Activated naive CD4-positive, alpha-beta T cell treated with anti-CD3 and anti-CD28 coated beads for 36 hours (primary cell): ENCODE measurements at regions of chr5 and their contacts with region 1.

Region 1: DNA sequence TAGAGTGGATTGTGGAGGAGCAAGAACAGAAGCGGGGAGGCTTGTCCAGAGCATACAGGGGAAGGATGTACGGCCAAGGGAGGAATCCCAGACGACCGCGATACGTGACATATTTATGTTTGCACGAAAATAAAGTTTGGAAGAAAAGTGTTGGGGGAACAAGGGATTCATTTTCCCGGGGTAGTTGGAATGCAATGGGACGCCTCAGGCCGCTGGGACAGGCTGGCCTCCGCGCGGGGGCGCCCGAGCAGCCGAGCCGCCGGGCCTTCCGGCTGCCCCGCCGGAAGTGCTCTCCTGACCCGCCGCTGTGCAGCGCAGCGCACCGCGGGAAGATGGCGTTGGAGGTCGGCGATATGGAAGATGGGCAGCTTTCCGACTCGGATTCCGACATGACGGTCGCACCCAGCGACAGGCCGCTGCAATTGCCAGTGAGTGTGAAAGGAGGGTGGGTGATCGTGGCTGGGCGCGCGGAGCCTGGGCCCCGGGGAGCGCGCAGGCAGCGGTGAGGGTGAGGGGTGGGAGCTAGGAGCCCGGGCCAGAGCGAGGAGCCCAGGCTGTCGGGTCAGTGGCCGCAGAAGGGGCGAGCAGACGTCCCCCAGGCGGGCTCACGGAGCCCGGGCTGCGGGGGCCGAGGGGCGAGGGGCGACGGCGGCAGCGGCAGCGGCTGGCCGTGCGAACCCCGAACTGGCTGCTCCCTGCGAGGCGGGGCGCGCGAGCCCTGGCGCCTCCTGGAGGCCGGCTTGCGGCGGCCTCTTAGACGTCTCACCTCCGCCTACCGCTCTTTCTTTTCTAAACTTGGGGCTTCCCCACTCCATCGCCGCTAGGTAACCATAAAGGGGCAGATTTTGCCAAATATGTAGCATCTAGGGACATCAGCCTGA is at the start of gene PHAX:
- DNase-seq: peak; percentile 78
- H3K4me3 Mint-ChIP-seq: peak within 1 kb of the TSS; percentile 90
- H3K27ac Mint-ChIP-seq: peak within 1 kb of the TSS; percentile 93
- H3K4me1 Mint-ChIP-seq: peaks cover 34% of the 10 kb centered on the region
- H3K27me3 Mint-ChIP-seq: no peaks in the 10 kb centered on the region
- total RNA-seq, gene PHAX: 34.9 to 37.2 TPM

Region 2: GRCh38 chr5:126354012-126354857 is 246.6 kb before region 1 on chr5:
- CTCF ChIA-PET with region 1: interaction called, 4 read pairs
- intact Hi-C with region 1: loop called (anchors 1 kb)
- DNase-seq: no peak
- H3K4me3 Mint-ChIP-seq: peak overlapping the region; percentile 33
- H3K27ac Mint-ChIP-seq: no peak overlapping the region
- H3K4me1 Mint-ChIP-seq: peaks cover 12% of the 10 kb centered on the region
- H3K27me3 Mint-ChIP-seq: no peaks in the 10 kb centered on the region

Region 3: GRCh38 chr5:126422989-126423788 is 177.7 kb before region 1 on chr5 and contains the start of gene GRAMD2B:
- CTCF ChIA-PET with region 1: no interaction called
- intact Hi-C with region 1: loop called (anchors 1 kb)
- DNase-seq: peak; percentile 87
- H3K4me3 Mint-ChIP-seq: peak within 1 kb of the TSS; percentile 81
- H3K27ac Mint-ChIP-seq: peak within 1 kb of the TSS; percentile 88
- H3K4me1 Mint-ChIP-seq: peaks cover 29% of the 10 kb centered on the region
- H3K27me3 Mint-ChIP-seq: no peaks in the 10 kb centered on the region
- total RNA-seq, gene GRAMD2B: 8.7 to 10.8 TPM

Region 4: DNA sequence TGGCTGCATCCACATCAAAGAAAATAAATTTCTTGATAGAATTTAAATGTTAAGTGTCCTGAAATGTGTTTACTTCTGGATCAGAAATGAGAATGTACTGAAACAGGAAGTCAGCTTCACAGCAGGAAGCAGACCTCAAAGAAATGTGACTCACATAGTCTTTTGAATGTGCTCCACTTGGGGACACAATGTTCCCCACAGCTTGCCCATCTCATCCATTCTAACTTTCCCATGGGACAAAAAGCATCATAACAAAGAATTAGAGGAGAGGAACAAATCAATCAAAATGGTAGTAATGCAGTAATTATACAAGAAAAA is 92.0 kb before region 1 on chr5:
- CTCF ChIA-PET with region 1: no interaction called
- intact Hi-C with region 1: loop called (anchors 2 kb)
- DNase-seq: peak; percentile 28
- H3K4me3 Mint-ChIP-seq: peak overlapping the region; percentile 33
- H3K27ac Mint-ChIP-seq: peak overlapping the region; percentile 64
- H3K4me1 Mint-ChIP-seq: peaks cover 40% of the 10 kb centered on the region
- H3K27me3 Mint-ChIP-seq: no peaks in the 10 kb centered on the region

Region 5: DNA sequence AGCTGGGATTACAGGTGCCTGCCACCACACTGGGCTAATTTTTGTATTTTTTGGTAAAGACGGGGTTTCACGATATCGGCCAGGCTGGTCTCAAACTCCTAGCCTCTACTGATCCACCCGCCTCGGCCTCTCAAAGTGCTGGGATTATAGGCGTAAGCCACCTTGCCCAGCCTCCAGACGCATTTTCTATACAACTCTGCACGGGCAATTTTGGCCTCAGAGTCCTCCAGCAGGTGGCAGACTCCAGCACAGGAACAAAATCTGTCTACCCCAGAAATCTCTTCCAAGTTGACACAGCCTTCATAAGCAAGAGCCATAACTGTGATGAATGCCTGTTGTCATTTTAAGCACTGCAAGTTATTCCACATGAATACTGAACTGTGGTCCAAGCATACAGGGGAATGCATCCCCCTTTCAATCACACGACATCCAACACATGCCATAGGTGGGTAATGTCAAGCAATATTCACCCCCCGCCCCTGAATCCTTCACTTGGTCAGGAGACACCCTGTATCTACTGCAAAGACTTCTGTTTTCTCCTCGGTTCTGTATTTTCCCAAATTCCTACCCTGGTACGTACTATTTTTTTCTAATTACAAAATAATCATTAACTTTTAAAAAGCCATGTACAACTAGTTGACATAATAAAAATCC is 56.7 kb before region 1 on chr5:
- CTCF ChIA-PET with region 1: interaction called, 3 read pairs
- intact Hi-C with region 1: loop called (anchors 1 kb)
- DNase-seq: peak; percentile 68
- H3K4me3 Mint-ChIP-seq: no peak overlapping the region
- H3K27ac Mint-ChIP-seq: no peak overlapping the region
- H3K4me1 Mint-ChIP-seq: no peaks in the 10 kb centered on the region
- H3K27me3 Mint-ChIP-seq: no peaks in the 10 kb centered on the region

Region 6: GRCh38 chr5:126624534-126624933 is 23.7 kb after region 1 on chr5:
- CTCF ChIA-PET with region 1: no interaction called
- intact Hi-C with region 1: loop called (anchors 2 kb)
- DNase-seq: peak; percentile 52
- H3K4me3 Mint-ChIP-seq: no peak overlapping the region
- H3K27ac Mint-ChIP-seq: peak overlapping the region; percentile 76
- H3K4me1 Mint-ChIP-seq: peaks cover 15% of the 10 kb centered on the region
- H3K27me3 Mint-ChIP-seq: no peaks in the 10 kb centered on the region

Region 7: GRCh38 chr5:127517480-127518318 is 916.8 kb after region 1 on chr5 and contains the start of gene PRRC1:
- CTCF ChIA-PET with region 1: interaction called, 4 read pairs
- intact Hi-C with region 1: loop called (anchors 2 kb)
- DNase-seq: peak; percentile 83
- H3K4me3 Mint-ChIP-seq: peak within 1 kb of the TSS; percentile 81
- H3K27ac Mint-ChIP-seq: peak within 1 kb of the TSS; percentile 63
- H3K4me1 Mint-ChIP-seq: peaks cover 31% of the 10 kb centered on the region
- H3K27me3 Mint-ChIP-seq: no peaks in the 10 kb centered on the region
- total RNA-seq, gene PRRC1: 34.1 to 35.1 TPM